GM10248 (cell line): ENCODE measurements at regions of chr9 and their contacts with region 1.

Region 1: DNA sequence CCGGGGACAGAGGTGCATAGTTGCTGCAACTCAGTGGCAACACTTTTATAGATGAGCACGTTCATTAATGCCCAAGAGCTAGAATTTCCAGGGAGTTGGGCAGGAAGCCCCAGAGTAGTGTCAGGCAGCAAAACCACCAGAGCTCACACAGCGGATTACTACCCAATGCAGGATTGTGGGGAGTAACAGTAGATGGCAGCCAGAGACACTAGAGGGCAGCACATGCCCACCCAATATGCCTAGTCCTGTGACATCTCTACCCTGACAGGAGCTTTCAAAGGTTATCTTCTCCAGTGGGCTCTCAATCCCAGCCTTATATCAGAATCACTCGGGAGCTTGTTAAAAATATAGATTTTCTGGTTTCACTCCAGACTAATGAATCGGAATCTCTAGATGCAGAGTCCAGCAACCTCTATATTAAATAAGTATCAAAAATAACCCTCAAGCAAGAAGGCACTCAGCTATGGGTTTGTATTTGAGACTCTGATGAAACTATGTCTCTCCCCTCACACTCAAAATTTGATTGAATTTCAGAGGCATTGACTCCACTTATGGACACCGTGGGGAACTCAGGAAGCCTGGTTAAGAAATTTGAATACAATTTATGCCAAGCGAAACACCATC is 58.4 kb upstream of the PHF24 start:
- DNase-seq: peak; percentile 72
- CTCF ChIP-seq: peak; percentile 82

Region 2: GRCh38 chr9:34929506-34930102 is 30.0 kb after region 1 on chr9:
- CTCF ChIA-PET with region 1: interaction called, 10 read pairs
- POLR2A ChIA-PET with region 1: no interaction called
- DNase-seq: peak; percentile 28
- CTCF ChIP-seq: peak; percentile 53

Region 3: GRCh38 chr9:34983209-34983608 is 83.6 kb after region 1 on chr9:
- CTCF ChIA-PET with region 1: interaction called, 67 read pairs
- POLR2A ChIA-PET with region 1: no interaction called
- DNase-seq: peak; percentile 36
- CTCF ChIP-seq: no peak

Region 4: GRCh38 chr9:35042081-35042604 is 142.5 kb after region 1 on chr9:
- CTCF ChIA-PET with region 1: interaction called, 10 read pairs
- POLR2A ChIA-PET with region 1: no interaction called
- DNase-seq: no peak
- CTCF ChIP-seq: no peak

Region 5: GRCh38 chr9:35096035-35096849 is 196.6 kb after region 1 on chr9 and contains the start of gene PIGO:
- CTCF ChIA-PET with region 1: interaction called, 73 read pairs
- POLR2A ChIA-PET with region 1: no interaction called
- DNase-seq: peak; percentile 89
- CTCF ChIP-seq: peak; percentile 96

Region 6: GRCh38 chr9:35258676-35259474 is 359.2 kb after region 1 on chr9:
- CTCF ChIA-PET with region 1: interaction called, 21 read pairs
- POLR2A ChIA-PET with region 1: no interaction called
- DNase-seq: peak; percentile 24
- CTCF ChIP-seq: peak; percentile 54